CD4-positive, alpha-beta T cell (primary cell): ENCODE measurements at regions of chr17 and their contacts with region 1.

Region 1: GRCh38 chr17:43846221-43846712 is 709 bp upstream of the CD300LG start:
- DNase-seq: peak; percentile 59 to 83 (median 72)
- ATAC-seq: peak; percentile 100
- H3K4me3 ChIP-seq: no peak overlapping the region
- H3K4me3 Mint-ChIP-seq: no peak overlapping the region
- H3K27ac ChIP-seq: no peak overlapping the region
- H3K27ac Mint-ChIP-seq: no peak overlapping the region
- H3K4me1 ChIP-seq: no peaks in the 10 kb centered on the region
- H3K4me1 Mint-ChIP-seq: no peaks in the 10 kb centered on the region
- H3K27me3 ChIP-seq: peaks cover 3 to 7% of the 10 kb centered on the region in 2 experiments
- H3K27me3 Mint-ChIP-seq: peaks cover 40% of the 10 kb centered on the region
- CTCF ChIP-seq: peak; percentile 92

Region 2: DNA sequence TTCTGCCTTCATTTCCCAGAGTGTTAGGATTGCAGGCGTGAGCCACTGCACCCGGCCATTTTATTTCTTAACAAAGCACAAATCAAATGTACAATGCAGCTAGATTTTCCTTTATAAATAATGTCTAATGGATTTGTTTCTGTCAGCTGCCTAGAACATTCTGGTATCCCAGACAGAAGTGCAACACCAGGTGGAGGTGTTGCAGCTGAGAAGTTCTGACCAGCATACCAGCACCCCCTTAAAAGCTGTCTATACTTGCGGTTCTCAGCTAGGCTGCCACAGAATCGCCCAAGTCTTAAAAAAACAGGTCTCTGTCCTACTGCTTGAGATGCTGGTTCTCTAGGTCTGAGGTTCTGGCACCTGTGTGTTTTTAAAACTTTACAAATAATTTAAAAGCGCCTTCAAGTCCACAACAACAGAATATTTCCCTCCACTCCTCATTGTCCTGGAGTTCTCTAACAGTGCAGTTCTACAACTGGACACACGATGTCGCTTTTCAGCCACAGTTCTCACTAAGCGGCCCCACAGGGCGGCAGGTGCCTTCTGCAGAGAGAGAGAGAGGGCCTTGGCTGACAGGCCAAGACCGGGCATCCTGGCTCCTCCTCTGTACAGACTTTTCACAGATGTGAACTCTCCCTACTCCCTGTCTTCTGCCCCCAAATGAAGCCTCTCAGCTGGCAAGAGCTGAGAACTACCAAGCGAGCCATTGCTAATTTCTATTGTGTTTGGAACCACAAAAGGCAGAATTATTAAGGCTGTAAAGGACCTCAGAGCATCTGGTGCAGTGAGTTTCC is 152.0 kb before region 1 on chr17:
- CTCF ChIA-PET with region 1: interaction called, 7 read pairs
- POLR2A ChIA-PET with region 1: no interaction called
- intact Hi-C with region 1: loop called (anchors 5 kb)
- DNase-seq: peak; percentile 53 to 88 (median 65)
- ATAC-seq: peak; percentile 97
- H3K4me3 ChIP-seq: no peak overlapping the region
- H3K4me3 Mint-ChIP-seq: no peak overlapping the region
- H3K27ac ChIP-seq: no peak overlapping the region
- H3K27ac Mint-ChIP-seq: no peak overlapping the region
- H3K4me1 ChIP-seq: no peaks in the 10 kb centered on the region
- H3K4me1 Mint-ChIP-seq: no peaks in the 10 kb centered on the region
- H3K27me3 ChIP-seq: peaks cover 0 to 5% of the 10 kb centered on the region in 2 experiments
- H3K27me3 Mint-ChIP-seq: peaks cover 20% of the 10 kb centered on the region
- CTCF ChIP-seq: peak; percentile 90